Activated CD4-positive, alpha-beta T cell treated with anti-CD3 and anti-CD28 coated beads for 36 hours (primary cell): ENCODE measurements at regions of chr21 and their contacts with region 1.

Region 1: GRCh38 chr21:38766987-38767722 is 38.6 kb upstream of the ETS2 start:
- DNase-seq: peak; percentile 83
- ATAC-seq: peak; percentile 78
- H3K4me3 Mint-ChIP-seq: peak overlapping the region; percentile 46
- H3K27ac Mint-ChIP-seq: peak overlapping the region; percentile 97
- H3K4me1 Mint-ChIP-seq: peaks cover 56% of the 10 kb centered on the region
- H3K27me3 Mint-ChIP-seq: peaks cover 2% of the 10 kb centered on the region

Region 2: DNA sequence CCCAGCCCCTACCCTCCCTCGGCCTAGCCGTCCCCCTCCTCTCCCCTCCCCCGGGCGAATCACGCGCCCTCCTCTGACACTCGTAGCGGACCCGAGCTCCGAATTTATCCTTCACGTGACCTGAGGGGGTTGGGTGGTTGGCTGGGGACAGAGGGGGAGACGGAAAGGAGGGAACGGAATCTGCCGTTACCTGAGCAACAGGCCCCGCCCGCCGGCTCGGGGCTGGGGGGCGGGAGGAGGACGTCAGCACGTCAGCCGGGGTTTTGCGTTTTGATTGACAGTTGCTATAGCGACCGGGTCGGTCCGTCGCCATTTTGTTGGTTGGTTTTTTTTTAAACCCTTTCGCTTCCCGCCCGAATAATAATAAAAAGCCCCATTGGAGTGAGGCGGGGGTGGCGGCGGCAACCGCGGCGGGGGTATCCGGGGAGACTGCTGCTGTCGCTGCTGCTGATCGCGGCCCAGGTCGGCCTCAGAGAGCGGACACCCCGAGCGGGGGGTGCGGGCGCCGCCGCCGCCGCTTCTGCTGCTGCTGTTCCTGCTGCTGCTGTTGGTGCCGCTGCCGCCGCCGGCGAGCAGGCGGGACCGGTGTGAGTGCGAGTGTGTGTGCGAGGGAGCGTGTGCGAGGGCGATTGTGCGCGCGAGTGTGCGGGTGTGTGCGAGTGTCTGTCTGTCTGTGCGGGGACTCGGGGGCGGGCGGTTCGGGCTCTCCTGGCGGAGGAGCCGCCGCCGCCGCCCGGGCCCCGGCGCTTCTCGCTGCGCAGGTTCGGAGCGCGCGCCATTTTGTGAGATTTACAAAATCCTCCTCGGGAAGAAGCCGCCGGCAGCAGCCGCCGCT is 1400.5 kb before region 1 on chr21 and contains the start of gene DYRK1A:
- CTCF ChIA-PET with region 1: no interaction called
- POLR2A ChIA-PET with region 1: no interaction called
- intact Hi-C with region 1: loop called in 1 of 2 experiments (anchors 2 kb)
- DNase-seq: peak; percentile 98
- ATAC-seq: peak; percentile 82
- H3K4me3 Mint-ChIP-seq: peak within 1 kb of the TSS; percentile 99
- H3K27ac Mint-ChIP-seq: peak within 1 kb of the TSS; percentile 100
- H3K4me1 Mint-ChIP-seq: peaks cover 42% of the 10 kb centered on the region
- H3K27me3 Mint-ChIP-seq: no peaks in the 10 kb centered on the region
- total RNA-seq, gene DYRK1A: 51.1 to 76.9 TPM

Region 3: DNA sequence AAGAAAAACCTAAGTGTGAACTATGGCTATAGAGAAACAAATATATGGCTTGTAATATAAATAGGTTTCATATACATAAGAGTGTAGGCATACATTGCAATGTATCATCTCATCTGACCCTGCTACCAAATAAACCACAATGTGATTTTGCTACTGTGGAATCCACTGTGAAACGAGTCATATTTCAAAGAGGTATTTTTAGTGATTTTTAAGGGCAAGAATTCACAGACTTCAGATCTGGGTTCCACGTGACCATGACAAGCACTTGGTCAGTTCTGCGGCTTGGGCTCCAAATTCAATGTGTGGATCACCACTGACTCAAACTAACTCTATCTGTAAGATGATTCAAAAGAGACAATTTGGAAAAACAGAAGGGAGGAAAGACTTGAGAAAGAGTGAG is 121.9 kb before region 1 on chr21:
- CTCF ChIA-PET with region 1: no interaction called
- POLR2A ChIA-PET with region 1: no interaction called
- intact Hi-C with region 1: loop called in 1 of 2 experiments (anchors 1 kb)
- DNase-seq: no peak
- ATAC-seq: peak; percentile 31
- H3K4me3 Mint-ChIP-seq: no peak overlapping the region
- H3K27ac Mint-ChIP-seq: peak overlapping the region; percentile 51
- H3K4me1 Mint-ChIP-seq: peaks cover 19% of the 10 kb centered on the region
- H3K27me3 Mint-ChIP-seq: peaks cover 36% of the 10 kb centered on the region

Region 4: GRCh38 chr21:38798481-38798882 is 31.3 kb after region 1 on chr21:
- CTCF ChIA-PET with region 1: interaction called, 14 read pairs
- POLR2A ChIA-PET with region 1: interaction called, 4 read pairs
- intact Hi-C with region 1: loop called in 1 of 2 experiments (anchors 1 kb)
- DNase-seq: peak; percentile 73
- ATAC-seq: peak; percentile 79
- H3K4me3 Mint-ChIP-seq: no peak overlapping the region
- H3K27ac Mint-ChIP-seq: peak overlapping the region; percentile 86
- H3K4me1 Mint-ChIP-seq: peaks cover 27% of the 10 kb centered on the region
- H3K27me3 Mint-ChIP-seq: peaks cover 3% of the 10 kb centered on the region

Region 5: GRCh38 chr21:38839328-38840286 is 72.5 kb after region 1 on chr21:
- CTCF ChIA-PET with region 1: no interaction called
- POLR2A ChIA-PET with region 1: no interaction called
- intact Hi-C with region 1: loop called in 1 of 2 experiments (anchors 2 kb)
- DNase-seq: peak; percentile 68
- ATAC-seq: peak; percentile 83
- H3K4me3 Mint-ChIP-seq: no peak overlapping the region
- H3K27ac Mint-ChIP-seq: peak overlapping the region; percentile 66
- H3K4me1 Mint-ChIP-seq: peaks cover 28% of the 10 kb centered on the region
- H3K27me3 Mint-ChIP-seq: no peaks in the 10 kb centered on the region

Region 6: GRCh38 chr21:39183237-39184007 is 416.3 kb after region 1 on chr21 and contains the start of gene PSMG1:
- CTCF ChIA-PET with region 1: no interaction called
- POLR2A ChIA-PET with region 1: interaction called, 4 read pairs
- intact Hi-C with region 1: loop called in 1 of 2 experiments (anchors 1 kb)
- DNase-seq: peak; percentile 97
- ATAC-seq: peak; percentile 92
- H3K4me3 Mint-ChIP-seq: peak within 1 kb of the TSS; percentile 95
- H3K27ac Mint-ChIP-seq: peak within 1 kb of the TSS; percentile 97
- H3K4me1 Mint-ChIP-seq: peaks cover 63% of the 10 kb centered on the region
- H3K27me3 Mint-ChIP-seq: no peaks in the 10 kb centered on the region
- total RNA-seq, gene PSMG1: 109 to 123 TPM

Region 7: DNA sequence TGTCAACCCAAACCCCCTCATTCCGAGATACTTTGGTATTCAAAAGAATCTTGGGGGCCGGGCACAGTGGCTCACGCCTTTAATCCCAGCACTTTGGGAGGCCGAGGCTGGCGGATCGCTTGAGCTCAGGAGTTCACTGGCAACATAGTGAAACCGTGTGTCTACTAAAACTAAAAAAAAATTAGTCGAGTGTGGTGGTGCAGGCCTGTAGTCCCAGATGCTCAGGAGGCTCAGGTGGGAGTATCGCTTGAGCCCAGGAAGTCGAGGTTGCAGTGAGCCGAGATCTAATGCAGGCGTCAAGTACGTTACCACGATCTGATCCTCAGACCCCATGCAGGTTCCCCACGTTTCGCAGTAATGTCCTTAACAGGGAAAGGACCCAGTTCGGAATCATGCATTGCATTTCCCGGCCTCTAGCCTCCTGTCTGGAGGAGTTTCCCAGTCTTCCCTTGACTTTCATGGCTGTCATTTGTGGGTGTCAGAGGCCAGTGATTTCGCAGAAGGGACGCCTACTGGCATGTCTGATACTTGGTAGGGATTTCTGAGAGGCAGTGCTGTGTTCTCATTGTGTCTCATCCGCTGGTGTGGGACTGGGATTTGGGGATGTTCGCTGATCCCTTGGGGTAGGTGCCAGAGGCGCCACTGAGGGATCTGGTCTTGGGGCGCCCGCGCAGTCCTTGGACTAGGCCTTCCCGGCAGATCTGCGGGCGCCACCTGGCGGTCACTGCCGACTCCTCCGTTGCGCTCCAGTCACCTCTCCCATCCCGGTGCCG is 621.1 kb after region 1 on chr21:
- CTCF ChIA-PET with region 1: interaction called, 3 read pairs
- POLR2A ChIA-PET with region 1: no interaction called
- intact Hi-C with region 1: loop called in 1 of 2 experiments (anchors 10 kb)
- DNase-seq: peak; percentile 95
- ATAC-seq: peak; percentile 83
- H3K4me3 Mint-ChIP-seq: peak overlapping the region; percentile 73
- H3K27ac Mint-ChIP-seq: peak overlapping the region; percentile 89
- H3K4me1 Mint-ChIP-seq: peaks cover 25% of the 10 kb centered on the region
- H3K27me3 Mint-ChIP-seq: no peaks in the 10 kb centered on the region